Activated CD8-positive, alpha-beta T cell treated with anti-CD3 and anti-CD28 coated beads for 36 hours (primary cell): ENCODE measurements at regions of chr5 and their contacts with region 1.

Region 1: GRCh38 chr5:139574641-139575312 is 13.6 kb downstream of the UBE2D2 start:
- DNase-seq: peak; percentile 25
- ATAC-seq: peak; percentile 46
- H3K4me3 Mint-ChIP-seq: no peak overlapping the region
- H3K27ac Mint-ChIP-seq: peak overlapping the region; percentile 25
- H3K4me1 Mint-ChIP-seq: peaks cover 70% of the 10 kb centered on the region
- H3K27me3 Mint-ChIP-seq: no peaks in the 10 kb centered on the region
- CTCF ChIP-seq: peak; percentile 78

Region 2: DNA sequence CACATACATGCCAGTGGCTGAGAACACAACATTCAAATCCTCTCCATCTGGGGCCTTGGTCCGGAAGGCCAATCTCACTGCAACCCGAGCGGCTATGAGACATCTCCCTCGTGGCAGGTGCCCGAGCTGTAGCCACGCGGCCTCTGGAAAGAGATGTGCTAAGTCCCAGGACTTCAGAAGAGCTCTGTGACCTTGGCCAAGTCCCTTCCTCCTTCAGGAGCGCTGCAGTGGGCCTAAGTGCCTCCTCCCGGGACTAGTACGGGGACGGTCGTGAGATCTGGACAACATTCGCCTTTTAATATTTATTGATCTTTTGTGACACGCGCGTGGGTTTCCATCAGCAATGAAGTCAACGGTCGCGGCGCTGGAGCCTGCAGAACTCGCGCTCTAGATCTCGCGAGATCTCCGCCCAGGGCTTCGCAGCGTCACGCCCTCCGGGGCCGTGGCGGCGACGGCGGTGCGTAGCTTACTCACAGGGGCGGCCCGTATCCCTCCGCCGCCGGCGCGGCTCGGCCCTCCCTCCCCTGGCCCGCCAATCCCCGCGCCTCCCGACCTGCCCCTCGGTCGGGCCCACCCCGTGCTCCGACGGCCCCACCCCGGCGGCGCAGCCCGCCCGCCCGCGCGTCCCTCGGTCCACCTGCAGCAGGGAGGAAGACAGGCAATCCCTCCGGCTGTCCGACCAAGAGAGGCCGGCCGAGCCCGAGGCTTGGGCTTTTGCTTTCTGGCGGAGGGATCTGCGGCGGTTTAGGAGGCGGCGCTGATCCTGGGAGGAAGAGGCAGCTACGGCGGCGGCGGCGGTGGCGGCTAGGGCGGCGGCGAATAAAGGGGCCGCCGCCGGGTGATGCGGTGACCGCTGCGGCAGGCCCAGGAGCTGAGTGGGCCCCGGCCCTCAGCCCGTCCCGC is 13.8 kb before region 1 on chr5 and contains the start of gene UBE2D2:
- CTCF ChIA-PET with region 1: interaction called, 56 read pairs
- POLR2A ChIA-PET with region 1: interaction called, 78 read pairs
- intact Hi-C with region 1: no loop called
- DNase-seq: peak; percentile 98
- ATAC-seq: peak; percentile 91
- H3K4me3 Mint-ChIP-seq: peak within 1 kb of the TSS; percentile 87
- H3K27ac Mint-ChIP-seq: peak within 1 kb of the TSS; percentile 92
- H3K4me1 Mint-ChIP-seq: peaks cover 19% of the 10 kb centered on the region
- H3K27me3 Mint-ChIP-seq: no peaks in the 10 kb centered on the region
- CTCF ChIP-seq: no peak
- total RNA-seq, gene UBE2D2: 239 to 253 TPM

Region 3: GRCh38 chr5:139690064-139690802 is 115.5 kb after region 1 on chr5:
- CTCF ChIA-PET with region 1: interaction called, 10 read pairs
- POLR2A ChIA-PET with region 1: no interaction called
- intact Hi-C with region 1: no loop called
- DNase-seq: peak; percentile 48
- ATAC-seq: peak; percentile 66
- H3K4me3 Mint-ChIP-seq: no peak overlapping the region
- H3K27ac Mint-ChIP-seq: no peak overlapping the region
- H3K4me1 Mint-ChIP-seq: peaks cover 7% of the 10 kb centered on the region
- H3K27me3 Mint-ChIP-seq: no peaks in the 10 kb centered on the region
- CTCF ChIP-seq: peak; percentile 53